Activated CD4-positive, alpha-beta T cell treated with anti-CD3 and anti-CD28 coated beads, Interleukin-2, amount 10 ng/mL, durations not matched to agents 24 days and 14 days (primary cell): ENCODE measurements at regions of chr4 and their contacts with region 1.

Region 1: GRCh38 chr4:25312496-25313200 is at the start of gene ZCCHC4:
- DNase-seq: peak; percentile 97
- H3K4me3 Mint-ChIP-seq: peak within 1 kb of the TSS; percentile 100
- H3K27ac Mint-ChIP-seq: peak within 1 kb of the TSS; percentile 97
- H3K4me1 Mint-ChIP-seq: peaks cover 11% of the 10 kb centered on the region
- H3K27me3 Mint-ChIP-seq: no peaks in the 10 kb centered on the region
- total RNA-seq, gene ZCCHC4: 15.5 and 15.6 TPM in 2 replicates

Region 2: GRCh38 chr4:25180524-25181131 is 132.0 kb before region 1 on chr4:
- intact Hi-C with region 1: loop called (anchors 2 kb)
- DNase-seq: peak; percentile 78
- H3K4me3 Mint-ChIP-seq: no peak overlapping the region
- H3K27ac Mint-ChIP-seq: no peak overlapping the region
- H3K4me1 Mint-ChIP-seq: peaks cover 19% of the 10 kb centered on the region
- H3K27me3 Mint-ChIP-seq: no peaks in the 10 kb centered on the region

Region 3: GRCh38 chr4:25376754-25377571 is 64.3 kb after region 1 on chr4 and contains the start of gene ANAPC4:
- intact Hi-C with region 1: loop called (anchors 1 kb)
- DNase-seq: peak; percentile 99
- H3K4me3 Mint-ChIP-seq: no peak within 1 kb of the TSS
- H3K27ac Mint-ChIP-seq: peak within 1 kb of the TSS; percentile 87
- H3K4me1 Mint-ChIP-seq: peaks cover 8% of the 10 kb centered on the region
- H3K27me3 Mint-ChIP-seq: no peaks in the 10 kb centered on the region
- total RNA-seq, gene ANAPC4: 37.4 and 42.1 TPM in 2 replicates